Activated B cell treated with CpG ODN at 0.5 μM for 24 hours (primary cell): ENCODE measurements at regions of chr15 and their contacts with region 1.

Region 1: DNA sequence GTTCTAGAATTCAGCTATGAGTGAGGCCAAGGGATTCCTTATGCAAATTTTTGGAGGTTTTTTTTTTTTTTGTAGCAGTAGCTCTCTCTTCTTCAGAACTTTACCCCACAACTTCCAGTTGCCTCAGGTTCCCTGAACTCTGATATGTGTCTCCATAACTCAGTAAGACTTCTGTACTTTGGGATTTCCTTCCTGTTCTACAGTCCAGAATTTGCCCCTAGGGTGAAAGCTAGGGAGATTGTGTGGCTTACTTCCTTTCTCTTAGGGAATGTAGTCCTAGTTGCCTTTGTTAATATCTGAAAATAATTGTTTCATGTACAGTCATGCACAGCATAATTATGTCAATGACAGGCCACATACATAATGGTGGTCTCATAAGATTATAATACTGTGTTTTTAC is 30.8 kb downstream of the LRRC28 start:
- DNase-seq: no peak
- ATAC-seq: no peak
- H3K4me3 Mint-ChIP-seq: no peak overlapping the region
- H3K27ac Mint-ChIP-seq: no peak overlapping the region
- H3K4me1 Mint-ChIP-seq: peaks cover 11% of the 10 kb centered on the region
- H3K27me3 Mint-ChIP-seq: no peaks in the 10 kb centered on the region
- CTCF ChIP-seq: no peak

Region 2: DNA sequence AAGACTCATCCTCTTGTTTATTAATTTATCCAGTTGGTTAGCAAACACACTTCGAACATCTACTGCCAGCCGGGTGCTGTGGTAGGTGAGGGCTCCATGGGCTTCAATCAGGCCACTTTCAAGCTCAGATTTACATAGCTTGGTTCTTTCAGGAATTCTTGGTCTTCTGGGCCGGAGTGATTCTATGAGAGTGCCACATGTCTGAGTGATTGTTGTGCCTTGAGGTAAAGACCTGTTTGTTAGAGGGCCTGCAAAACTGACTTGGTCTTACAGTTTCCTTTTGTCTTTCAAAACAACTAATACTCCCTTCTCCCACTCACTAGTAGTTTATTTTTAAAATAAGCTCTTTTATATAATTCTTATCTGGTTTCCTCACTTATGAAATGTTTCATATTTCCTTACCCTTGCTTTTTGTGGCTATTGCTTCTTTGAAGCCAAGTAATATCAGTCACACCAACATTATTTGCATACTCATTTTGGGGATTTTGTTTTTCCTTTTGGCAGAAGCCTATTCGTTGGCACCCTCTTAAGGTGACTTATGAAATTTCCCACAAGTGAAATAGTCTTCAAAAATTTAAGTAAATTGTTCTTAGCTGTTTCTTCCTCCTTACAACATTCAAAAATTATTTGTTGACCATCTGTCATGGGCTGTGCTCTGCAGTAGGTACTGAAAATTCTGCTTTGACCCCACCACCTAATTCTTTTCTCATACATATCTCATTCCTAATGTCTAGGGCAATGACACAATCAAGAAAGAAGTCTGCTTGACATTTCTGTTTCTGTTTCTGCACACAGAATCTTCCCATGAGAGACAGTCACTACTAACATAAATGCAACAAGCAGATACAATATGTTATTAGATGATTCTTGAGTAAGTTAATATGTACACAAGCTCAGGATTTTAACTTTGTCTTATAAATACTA is 89.3 kb after region 1 on chr15:
- CTCF ChIA-PET with region 1: no interaction called
- POLR2A ChIA-PET with region 1: interaction called, 8 read pairs
- intact Hi-C with region 1: loop called (anchors 1 kb)
- DNase-seq: no peak
- ATAC-seq: peak; percentile 73
- H3K4me3 Mint-ChIP-seq: no peak overlapping the region
- H3K27ac Mint-ChIP-seq: peak overlapping the region; percentile 10
- H3K4me1 Mint-ChIP-seq: peaks cover 16% of the 10 kb centered on the region
- H3K27me3 Mint-ChIP-seq: no peaks in the 10 kb centered on the region
- CTCF ChIP-seq: no peak